Natural killer cell (primary cell): ENCODE measurements at regions of chr1 and their contacts with region 1.

Region 1: DNA sequence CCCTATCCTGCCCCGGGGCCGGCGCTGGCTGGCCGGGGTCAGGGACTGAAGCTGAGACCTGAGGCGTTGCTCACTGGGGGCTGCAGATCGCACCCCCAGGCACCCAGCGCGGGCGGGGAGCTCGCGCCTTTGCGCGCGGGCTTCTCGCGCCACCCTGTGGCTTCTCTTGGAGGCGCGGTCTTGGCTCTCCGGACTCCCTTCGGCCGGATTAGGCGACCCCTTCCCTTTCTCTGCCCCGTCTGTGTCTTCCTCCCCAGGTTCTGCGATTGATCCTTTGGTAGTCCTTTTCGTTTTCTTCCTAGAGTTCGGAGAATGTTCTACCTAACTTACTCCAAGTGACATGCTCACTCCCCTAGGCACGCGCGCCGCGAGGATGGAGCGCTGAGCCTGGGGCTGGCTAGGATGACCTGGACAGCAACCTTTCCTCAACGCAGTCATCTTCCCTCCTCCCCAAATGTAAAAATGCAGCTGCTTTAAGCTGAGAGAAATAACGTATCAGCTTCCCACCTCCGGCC is 495 bp upstream of the NTRK1 start:
- DNase-seq: peak; percentile 66 to 78
- ATAC-seq: peak; percentile 70 to 77 (median 75)
- H3K4me3 ChIP-seq: peak overlapping the region; percentile 25
- H3K4me3 Mint-ChIP-seq: peak overlapping the region; percentile 84
- H3K27ac ChIP-seq: no peak overlapping the region
- H3K27ac Mint-ChIP-seq: peak overlapping the region in 1 of 2 donors; percentile 78
- H3K4me1 ChIP-seq: peaks cover 25% of the 10 kb centered on the region
- H3K4me1 Mint-ChIP-seq: peaks cover 12 to 31% of the 10 kb centered on the region in 2 donors
- H3K27me3 ChIP-seq: peaks cover 39% of the 10 kb centered on the region
- H3K27me3 Mint-ChIP-seq: peaks cover 48 to 50% of the 10 kb centered on the region in 2 donors
- CTCF ChIP-seq: peak; percentile 91

Region 2: GRCh38 chr1:156767101-156767878 is 92.9 kb before region 1 on chr1 and contains the start of gene PRCC:
- intact Hi-C with region 1: no loop called
- DNase-seq: peak; percentile 94 to 99
- ATAC-seq: peak; percentile 91 to 98 (median 93)
- H3K4me3 ChIP-seq: peak within 1 kb of the TSS; percentile 86
- H3K4me3 Mint-ChIP-seq: no peak within 1 kb of the TSS
- H3K27ac ChIP-seq: peak within 1 kb of the TSS; percentile 98
- H3K27ac Mint-ChIP-seq: no peak within 1 kb of the TSS
- H3K4me1 ChIP-seq: peaks cover 33% of the 10 kb centered on the region
- H3K4me1 Mint-ChIP-seq: peaks cover 33 to 39% of the 10 kb centered on the region in 2 donors
- H3K27me3 ChIP-seq: no peaks in the 10 kb centered on the region
- H3K27me3 Mint-ChIP-seq: no peaks in the 10 kb centered on the region
- CTCF ChIP-seq: no peak
- total RNA-seq, gene PRCC: 66.5 to 92.4 (median 69.1) TPM

Region 3: DNA sequence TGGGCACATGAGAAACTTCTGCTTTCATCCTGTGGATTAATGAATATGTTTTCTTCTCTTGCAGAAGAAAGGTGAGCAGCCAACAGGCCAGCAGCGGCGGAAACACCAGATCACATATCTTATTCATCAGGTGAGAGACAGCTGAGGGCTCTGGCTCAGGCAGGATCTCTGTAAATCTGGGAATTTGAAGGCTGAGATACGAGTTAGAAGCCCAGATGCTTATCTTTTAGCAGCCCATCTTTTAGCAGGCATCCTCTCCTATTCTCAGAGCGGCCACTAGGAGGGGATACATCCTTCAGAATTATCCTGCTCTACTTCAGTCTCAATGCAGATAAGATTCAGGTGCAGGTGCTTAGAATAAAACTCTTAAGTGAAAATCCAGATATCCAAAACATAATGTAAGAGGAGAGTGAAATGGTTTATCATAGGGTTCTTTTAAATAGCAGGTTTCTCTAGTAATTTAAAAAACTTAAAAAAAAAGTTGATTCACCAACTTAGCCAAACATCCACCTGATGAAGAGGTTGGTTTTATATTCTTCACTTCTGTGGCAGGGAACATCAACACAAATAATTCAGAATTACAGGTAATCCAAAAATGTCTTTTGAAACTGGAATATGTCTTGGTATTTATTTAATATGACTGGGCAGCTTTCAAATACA is 62.8 kb before region 1 on chr1:
- intact Hi-C with region 1: loop called (anchors 1 kb)
- DNase-seq: peak; percentile 39 to 86
- ATAC-seq: peak; percentile 73 to 89 (median 75)
- H3K4me3 ChIP-seq: no peak overlapping the region
- H3K4me3 Mint-ChIP-seq: no peak overlapping the region
- H3K27ac ChIP-seq: no peak overlapping the region
- H3K27ac Mint-ChIP-seq: no peak overlapping the region
- H3K4me1 ChIP-seq: peaks cover 11% of the 10 kb centered on the region
- H3K4me1 Mint-ChIP-seq: peaks cover 14 to 16% of the 10 kb centered on the region in 2 donors
- H3K27me3 ChIP-seq: no peaks in the 10 kb centered on the region
- H3K27me3 Mint-ChIP-seq: no peaks in the 10 kb centered on the region
- CTCF ChIP-seq: peak; percentile 85

Region 4: DNA sequence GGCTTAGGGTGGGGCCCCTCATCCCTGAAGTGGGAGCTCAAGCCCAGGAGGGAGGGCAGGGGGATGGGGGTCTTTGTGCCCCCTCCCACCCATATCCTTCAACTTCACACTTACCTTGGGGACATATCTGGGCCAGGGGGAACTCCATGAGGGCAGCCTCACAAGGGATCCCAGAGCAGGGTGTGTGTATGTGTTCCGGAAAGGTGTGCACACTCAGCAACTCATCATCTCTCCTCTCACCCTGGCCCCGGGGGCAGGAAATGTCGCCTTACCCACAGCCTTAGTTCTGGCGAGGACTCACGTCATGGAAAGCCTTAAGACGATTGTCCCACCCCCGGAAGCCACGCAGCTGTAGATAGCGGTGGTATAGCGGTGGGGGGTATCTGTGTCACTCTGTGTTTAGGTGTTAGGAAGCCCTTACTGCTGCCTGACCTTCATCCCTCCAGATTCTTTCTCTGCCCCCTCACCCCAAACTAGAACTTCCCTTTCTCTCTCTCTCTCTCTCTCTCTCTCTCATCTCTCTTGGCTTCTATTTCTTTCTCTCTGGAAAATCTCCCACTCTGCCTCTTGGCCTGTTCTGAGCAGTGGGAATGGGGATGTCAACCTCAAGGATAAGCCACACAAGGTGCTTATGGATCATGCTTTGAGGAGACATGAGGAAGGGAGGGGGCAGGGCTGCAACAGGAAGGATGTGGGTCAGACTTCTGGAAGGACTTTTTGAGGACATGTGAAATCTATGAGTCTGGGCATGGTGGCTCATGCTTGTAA is 43.4 kb before region 1 on chr1 and contains the start of gene SH2D2A:
- intact Hi-C with region 1: loop called (anchors 1 kb)
- DNase-seq: peak; percentile 94 to 100
- ATAC-seq: peak; percentile 77 to 92 (median 84)
- H3K4me3 ChIP-seq: peak within 1 kb of the TSS; percentile 76
- H3K4me3 Mint-ChIP-seq: peak within 1 kb of the TSS; percentile 96
- H3K27ac ChIP-seq: peak within 1 kb of the TSS; percentile 99
- H3K27ac Mint-ChIP-seq: peak within 1 kb of the TSS; percentile 98
- H3K4me1 ChIP-seq: peaks cover 61% of the 10 kb centered on the region
- H3K4me1 Mint-ChIP-seq: peaks cover 67 to 79% of the 10 kb centered on the region in 2 donors
- H3K27me3 ChIP-seq: no peaks in the 10 kb centered on the region
- H3K27me3 Mint-ChIP-seq: no peaks in the 10 kb centered on the region
- CTCF ChIP-seq: no peak
- total RNA-seq, gene SH2D2A: 155 to 324 (median 312) TPM